ENCODE measurements at regions of chr19 and their contacts with region 1.

Region 1: DNA sequence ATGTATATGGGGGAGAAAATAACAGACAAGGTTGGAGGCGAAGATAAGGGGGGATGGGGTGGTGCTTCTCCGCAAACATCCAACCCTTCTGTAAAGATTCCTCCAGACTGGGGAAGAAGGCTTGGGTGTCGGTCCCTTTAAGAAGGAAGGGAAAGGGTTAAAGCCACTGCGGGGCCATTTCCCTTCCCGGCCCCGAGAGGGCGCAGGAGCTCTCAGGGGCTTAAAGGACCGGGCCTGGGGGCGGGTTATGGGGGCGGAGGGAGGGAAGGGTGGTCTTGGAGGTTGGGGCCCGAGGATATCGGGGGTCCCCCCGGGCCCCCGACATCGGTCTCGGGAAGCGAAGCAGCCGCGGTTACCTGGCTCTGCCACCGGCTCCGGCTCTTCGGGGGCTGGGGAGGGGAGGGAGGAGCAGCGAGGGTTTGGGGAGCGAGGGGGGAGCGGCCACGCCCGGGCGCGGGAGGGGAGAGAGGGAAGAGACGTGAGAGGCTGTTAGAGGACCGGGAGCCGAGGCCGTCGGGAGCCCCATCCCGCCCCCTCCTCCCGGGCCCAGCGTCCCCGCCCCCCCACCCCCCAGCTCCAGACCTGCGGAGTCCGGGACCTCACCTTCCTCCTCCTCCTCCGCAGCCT is 2.8 kb downstream of the TNNT1 start:
- DNase-seq: peak in 2 of 5 donors; percentile 28 to 51
- ATAC-seq: peak in 1 of 4 donors; percentile 1
- H3K4me3 ChIP-seq: peak overlapping the region in 2 of 12 donors; percentile 7 to 20
- H3K27ac ChIP-seq: peak overlapping the region in 2 of 12 donors; percentile 30 to 33
- H3K4me1 ChIP-seq: peaks cover 0 to 36% (median 2%) of the 10 kb centered on the region in 12 donors
- H3K27me3 ChIP-seq: peaks cover 4 to 71% (median 32%) of the 10 kb centered on the region in 9 donors
- CTCF ChIP-seq: peak in 10 of 12 donors; percentile 20 to 46 (median 34)
- POLR2A ChIP-seq: no peak

Region 2: GRCh38 chr19:54995561-54995960 is 150.6 kb before region 1 on chr19:
- intact Hi-C with region 1: no loop called
- DNase-seq: no peak
- ATAC-seq: no peak
- H3K4me3 ChIP-seq: no peak overlapping the region
- H3K27ac ChIP-seq: no peak overlapping the region
- H3K4me1 ChIP-seq: no peaks in the 10 kb centered on the region
- H3K27me3 ChIP-seq: peaks cover 0 to 10% (median 0%) of the 10 kb centered on the region in 9 donors
- CTCF ChIP-seq: no peak
- POLR2A ChIP-seq: no peak

Region 3: GRCh38 chr19:55046996-55047620 is 99.1 kb before region 1 on chr19:
- intact Hi-C with region 1: no loop called
- DNase-seq: no peak
- ATAC-seq: no peak
- H3K4me3 ChIP-seq: no peak overlapping the region
- H3K27ac ChIP-seq: no peak overlapping the region
- H3K4me1 ChIP-seq: peaks cover 0 to 4% (median 0%) of the 10 kb centered on the region in 12 donors
- H3K27me3 ChIP-seq: no peaks in the 10 kb centered on the region
- CTCF ChIP-seq: no peak
- POLR2A ChIP-seq: no peak

Region 4: DNA sequence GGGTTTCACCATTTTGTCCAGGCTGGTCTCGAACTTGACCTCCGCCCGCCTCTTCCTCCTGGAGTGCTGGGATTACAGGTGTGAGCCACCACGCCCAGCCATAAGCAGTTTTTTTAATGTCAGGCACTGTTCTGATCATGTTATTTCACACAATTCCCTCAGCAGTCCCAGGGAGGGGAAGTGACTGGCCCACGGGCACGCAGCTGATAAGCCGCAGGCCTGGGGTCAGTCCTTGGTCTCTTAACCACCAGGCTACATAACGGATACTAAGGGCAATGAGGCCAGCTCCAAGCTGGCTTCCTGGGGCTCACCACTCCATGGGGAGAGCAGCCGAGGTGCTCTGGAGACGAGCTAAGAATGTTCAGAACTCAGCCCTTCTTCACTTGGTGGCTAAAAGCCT is 151.1 kb after region 1 on chr19:
- intact Hi-C with region 1: no loop called
- DNase-seq: no peak
- ATAC-seq: no peak
- H3K4me3 ChIP-seq: no peak overlapping the region
- H3K27ac ChIP-seq: no peak overlapping the region
- H3K4me1 ChIP-seq: peaks cover 0 to 10% (median 4%) of the 10 kb centered on the region in 12 donors
- H3K27me3 ChIP-seq: no peaks in the 10 kb centered on the region
- CTCF ChIP-seq: no peak
- POLR2A ChIP-seq: no peak

Region 5: GRCh38 chr19:55418185-55418584 is 272.0 kb after region 1 on chr19:
- intact Hi-C with region 1: loop called in 9 of 10 experiments (anchors 1 to 10 kb)
- DNase-seq: peak in 3 of 5 donors; percentile 27 to 52 (median 43)
- ATAC-seq: peak in 3 of 4 donors; percentile 81 to 85 (median 85)
- H3K4me3 ChIP-seq: no peak overlapping the region
- H3K27ac ChIP-seq: no peak overlapping the region
- H3K4me1 ChIP-seq: no peaks in the 10 kb centered on the region
- H3K27me3 ChIP-seq: peaks cover 0 to 18% (median 0%) of the 10 kb centered on the region in 9 donors
- CTCF ChIP-seq: peak; percentile 43 to 72 (median 62)
- POLR2A ChIP-seq: no peak

Region 6: DNA sequence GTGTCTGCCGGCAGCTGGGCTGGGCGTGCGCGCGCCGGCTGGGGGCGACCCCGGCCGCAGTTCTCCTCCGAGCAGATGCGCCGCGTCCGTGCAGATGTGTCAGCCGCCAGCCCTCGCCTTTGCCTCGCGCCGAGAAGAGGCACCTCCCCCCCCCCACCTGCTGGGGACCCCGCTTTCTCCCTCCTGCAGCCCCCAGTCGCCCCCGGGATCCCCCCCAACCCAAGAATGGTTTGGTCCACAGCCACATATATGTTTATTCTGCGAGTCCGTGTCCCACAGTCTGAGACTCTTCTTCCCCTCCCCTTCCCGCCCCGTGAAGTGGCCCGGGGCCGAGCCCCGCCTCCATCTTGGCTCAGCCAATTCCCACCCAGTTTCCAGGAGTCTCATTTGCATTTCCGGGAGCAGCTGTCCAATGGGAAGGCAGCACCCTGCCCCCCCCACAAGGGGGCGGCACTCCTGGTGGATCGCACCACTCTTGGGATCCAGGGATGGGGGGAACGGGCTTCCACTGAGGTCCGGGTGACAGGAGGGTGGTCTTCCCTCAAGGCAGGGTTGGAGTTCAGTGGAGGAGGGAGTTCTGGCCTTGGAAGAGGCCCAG is 306.7 kb after region 1 on chr19:
- intact Hi-C with region 1: loop called in 1 of 10 experiments (anchors 10 kb)
- DNase-seq: peak; percentile 65 to 85 (median 72)
- ATAC-seq: peak; percentile 47 to 89 (median 78)
- H3K4me3 ChIP-seq: peak overlapping the region in 2 of 12 donors; percentile 21 to 29
- H3K27ac ChIP-seq: no peak overlapping the region
- H3K4me1 ChIP-seq: peaks cover 0 to 23% (median 11%) of the 10 kb centered on the region in 12 donors
- H3K27me3 ChIP-seq: peaks cover 14 to 35% (median 21%) of the 10 kb centered on the region in 9 donors
- CTCF ChIP-seq: peak in 2 of 12 donors; percentile 10 to 22
- POLR2A ChIP-seq: no peak

Region 7: DNA sequence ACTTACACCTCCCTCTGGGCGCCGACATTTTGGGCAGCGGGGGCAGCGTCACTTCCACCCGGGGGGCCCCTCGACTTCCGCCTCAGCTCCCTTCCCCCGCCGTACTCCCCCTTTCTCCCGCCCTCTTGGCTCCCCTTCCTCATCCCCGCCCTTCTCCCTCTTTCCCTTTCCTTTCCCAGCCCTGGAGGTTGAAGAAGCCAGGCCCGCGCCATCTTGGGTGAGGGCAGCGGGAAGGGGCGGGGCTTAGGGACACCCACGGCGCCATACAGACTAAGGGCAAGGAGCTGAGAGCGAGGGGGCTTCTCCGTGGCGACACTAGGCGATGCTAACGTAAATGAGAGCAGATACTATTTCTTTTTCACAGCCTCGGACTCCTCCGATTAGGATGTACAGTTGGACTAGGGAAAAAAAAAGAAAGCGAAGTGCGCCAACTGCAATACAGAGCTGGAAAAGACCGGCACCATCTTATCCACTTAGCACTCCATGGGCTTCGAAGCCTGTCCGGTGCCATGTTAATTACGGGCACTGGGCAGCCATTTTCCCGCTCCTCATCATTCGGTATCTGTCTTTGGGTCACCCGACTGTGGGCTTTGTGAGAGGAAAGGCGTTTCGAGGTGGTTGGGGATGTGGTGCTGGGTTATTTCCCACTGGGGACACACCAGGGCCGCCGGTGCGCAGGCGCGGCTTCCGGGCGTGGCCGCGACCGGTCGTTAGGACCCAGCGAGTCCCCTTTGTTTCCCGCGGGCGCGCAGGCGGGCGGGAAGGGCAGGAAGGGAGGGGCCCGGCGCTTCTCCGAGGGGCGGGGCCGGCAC is 453.5 kb after region 1 on chr19 and contains the start of gene FIZ1:
- intact Hi-C with region 1: loop called in 1 of 10 experiments (anchors 10 kb)
- DNase-seq: peak; percentile 98 to 99 (median 99)
- ATAC-seq: peak; percentile 87 to 96 (median 94)
- H3K4me3 ChIP-seq: peak within 1 kb of the TSS; percentile 62 to 99 (median 86)
- H3K27ac ChIP-seq: peak within 1 kb of the TSS; percentile 92 to 100 (median 99)
- H3K4me1 ChIP-seq: peaks cover 1 to 28% (median 14%) of the 10 kb centered on the region in 12 donors
- H3K27me3 ChIP-seq: no peaks in the 10 kb centered on the region
- CTCF ChIP-seq: no peak
- POLR2A ChIP-seq: no peak
- total RNA-seq, gene FIZ1: 11.2 to 15.4 (median 12.9) TPM